ENCODE measurements at regions of chr9 and their contacts with region 1.

Region 1: DNA sequence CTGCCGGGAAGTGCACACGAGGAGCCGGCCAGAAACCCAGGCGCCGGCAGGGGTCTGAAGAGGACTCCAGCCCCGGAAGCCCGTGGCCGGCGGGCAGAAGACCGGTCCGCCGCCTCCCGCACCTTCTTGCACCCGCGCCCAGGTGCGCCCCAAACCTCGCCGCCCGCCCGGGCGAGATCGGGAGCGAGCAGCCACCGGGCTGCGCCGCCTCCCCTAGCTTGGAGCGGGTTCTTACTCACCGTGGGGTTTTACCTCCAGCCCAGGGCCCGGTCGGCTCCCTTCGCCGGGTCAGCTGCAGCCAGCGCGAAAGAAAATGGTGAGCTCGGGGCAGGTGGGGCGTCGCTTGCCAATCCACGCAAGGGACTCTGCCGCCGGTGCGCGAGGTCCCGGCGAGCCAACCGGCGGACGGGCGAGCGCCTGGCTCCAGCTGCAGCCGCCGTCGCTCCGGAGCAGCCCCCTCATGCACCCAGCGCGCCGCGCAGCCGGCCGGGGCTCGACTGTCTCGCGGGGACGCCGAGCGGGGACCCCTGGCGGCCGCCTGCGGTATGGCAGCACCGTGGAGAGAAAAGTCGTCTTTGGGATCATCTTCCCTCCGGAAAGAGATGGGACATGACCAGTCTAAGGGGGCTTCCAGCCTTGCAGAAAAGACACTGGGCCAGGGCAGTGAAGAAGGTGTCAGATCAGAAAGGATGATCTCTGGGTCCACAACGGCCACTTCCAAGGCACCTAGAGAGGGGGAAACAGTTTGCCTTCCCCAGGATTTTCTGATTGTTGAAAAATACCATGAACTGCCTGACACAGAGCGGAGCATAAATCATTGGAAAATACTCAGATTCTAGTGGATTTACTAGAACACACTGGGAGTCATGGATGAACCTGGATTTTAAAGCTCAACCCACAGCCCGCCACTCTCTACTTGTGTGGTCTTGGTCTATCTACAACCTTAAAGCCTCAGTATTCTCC is at the start of gene MOB3B:
- DNase-seq: peak; percentile 65 to 76
- ATAC-seq: peak; percentile 89 to 96
- H3K4me3 ChIP-seq: peak within 1 kb of the TSS; percentile 70
- H3K27ac ChIP-seq: peak within 1 kb of the TSS; percentile 74 to 86
- H3K4me1 ChIP-seq: peaks cover 3% of the 10 kb centered on the region; the same call in 1 of the 3 replicates
- CTCF ChIP-seq: peak; percentile 74
- EP300 ChIP-seq: no peak
- POLR2A ChIP-seq: peak; percentile 14; the same call in 1 of the 2 replicates
- RAD21 ChIP-seq: peak; percentile 64 to 82
- polyA plus RNA-seq, gene MOB3B: 5.2 and 6.0 TPM in 2 replicates

Region 2: DNA sequence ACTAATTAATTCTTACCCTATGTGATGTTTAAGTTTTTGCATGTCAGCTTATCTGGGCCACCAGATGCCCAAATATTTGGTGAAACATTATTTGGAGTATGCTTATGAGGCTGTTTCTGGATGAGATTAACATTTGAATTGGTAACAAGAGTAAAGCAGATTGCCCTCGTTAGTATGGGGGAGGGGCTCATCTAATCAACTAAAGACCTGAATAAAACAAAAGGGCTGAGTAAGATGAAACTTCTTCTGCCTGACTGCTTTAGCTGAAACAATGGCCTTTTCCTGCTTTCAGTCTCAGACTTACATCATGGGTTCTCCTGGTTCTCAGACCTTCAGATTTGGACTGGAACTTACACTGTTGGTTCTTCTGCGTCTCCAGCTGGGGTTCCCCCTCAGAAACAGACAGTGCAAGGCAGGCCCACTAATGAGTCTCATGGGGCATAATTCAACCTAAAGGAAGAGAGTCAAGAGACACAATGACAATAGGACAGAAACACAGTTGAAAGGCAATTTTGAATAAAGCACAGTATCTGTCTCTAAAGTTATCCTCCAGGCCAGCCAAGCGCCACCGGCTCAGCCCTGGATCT is 925.4 kb before region 1 on chr9:
- CTCF ChIA-PET with region 1: no interaction called
- POLR2A ChIA-PET with region 1: no interaction called
- DNase-seq: no peak
- ATAC-seq: no peak
- H3K4me3 ChIP-seq: no peak overlapping the region
- H3K27ac ChIP-seq: no peak overlapping the region
- H3K4me1 ChIP-seq: no peaks in the 10 kb centered on the region
- CTCF ChIP-seq: no peak
- EP300 ChIP-seq: no peak
- POLR2A ChIP-seq: no peak
- RAD21 ChIP-seq: no peak

Region 3: GRCh38 chr9:27333241-27334052 is 196.2 kb before region 1 on chr9:
- CTCF ChIA-PET with region 1: interaction called, 266 read pairs
- POLR2A ChIA-PET with region 1: interaction called, 9 read pairs
- DNase-seq: peak; percentile 59 to 71
- ATAC-seq: peak; percentile 58 to 84
- H3K4me3 ChIP-seq: no peak overlapping the region
- H3K27ac ChIP-seq: peak overlapping the region; percentile 53; a peak in 4 of 6 replicates
- H3K4me1 ChIP-seq: peaks cover 6% of the 10 kb centered on the region; the same call in 2 of the 3 replicates
- CTCF ChIP-seq: peak; percentile 89
- EP300 ChIP-seq: no peak
- POLR2A ChIP-seq: no peak
- RAD21 ChIP-seq: peak; percentile 90 to 97

Region 4: GRCh38 chr9:27371382-27371781 is 158.2 kb before region 1 on chr9:
- CTCF ChIA-PET with region 1: interaction called, 12 read pairs
- POLR2A ChIA-PET with region 1: no interaction called
- DNase-seq: peak; percentile 41 to 67
- ATAC-seq: peak; percentile 88 to 94
- H3K4me3 ChIP-seq: no peak overlapping the region
- H3K27ac ChIP-seq: peak overlapping the region; percentile 58 to 69
- H3K4me1 ChIP-seq: peaks cover 25% of the 10 kb centered on the region
- CTCF ChIP-seq: no peak
- EP300 ChIP-seq: no peak
- POLR2A ChIP-seq: no peak
- RAD21 ChIP-seq: no peak

Region 5: GRCh38 chr9:27430750-27431535 is 98.7 kb before region 1 on chr9:
- CTCF ChIA-PET with region 1: interaction called, 20 read pairs
- POLR2A ChIA-PET with region 1: no interaction called
- DNase-seq: no peak
- ATAC-seq: no peak
- H3K4me3 ChIP-seq: no peak overlapping the region
- H3K27ac ChIP-seq: peak overlapping the region in 1 of 2 experiments; percentile 28; a peak in 2 of 6 replicates
- H3K4me1 ChIP-seq: peaks cover 58% of the 10 kb centered on the region
- CTCF ChIP-seq: no peak
- EP300 ChIP-seq: no peak
- POLR2A ChIP-seq: no peak
- RAD21 ChIP-seq: no peak

Region 6: DNA sequence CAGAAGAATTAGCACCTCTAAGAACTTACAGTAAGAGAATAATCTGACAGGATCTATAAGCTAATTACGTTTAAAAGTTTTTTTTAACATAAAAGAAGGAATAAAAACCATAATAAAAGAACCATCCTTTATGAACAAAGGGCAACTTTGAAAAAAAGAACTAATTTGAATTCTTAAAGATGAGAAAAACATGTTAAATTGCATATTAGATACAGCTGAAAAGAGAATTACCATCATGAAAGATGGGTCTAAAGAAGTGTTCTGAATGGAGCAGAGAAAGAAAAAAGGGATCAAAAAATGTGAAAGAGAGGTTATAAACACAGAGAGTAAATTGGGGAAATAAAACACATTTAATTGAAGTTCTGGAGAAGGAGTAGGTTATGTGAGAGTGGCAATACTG is 51.3 kb before region 1 on chr9:
- CTCF ChIA-PET with region 1: no interaction called
- POLR2A ChIA-PET with region 1: no interaction called
- DNase-seq: no peak
- ATAC-seq: no peak
- H3K4me3 ChIP-seq: no peak overlapping the region
- H3K27ac ChIP-seq: no peak overlapping the region
- H3K4me1 ChIP-seq: no peaks in the 10 kb centered on the region
- CTCF ChIP-seq: no peak
- EP300 ChIP-seq: no peak
- POLR2A ChIP-seq: no peak
- RAD21 ChIP-seq: no peak

Region 7: DNA sequence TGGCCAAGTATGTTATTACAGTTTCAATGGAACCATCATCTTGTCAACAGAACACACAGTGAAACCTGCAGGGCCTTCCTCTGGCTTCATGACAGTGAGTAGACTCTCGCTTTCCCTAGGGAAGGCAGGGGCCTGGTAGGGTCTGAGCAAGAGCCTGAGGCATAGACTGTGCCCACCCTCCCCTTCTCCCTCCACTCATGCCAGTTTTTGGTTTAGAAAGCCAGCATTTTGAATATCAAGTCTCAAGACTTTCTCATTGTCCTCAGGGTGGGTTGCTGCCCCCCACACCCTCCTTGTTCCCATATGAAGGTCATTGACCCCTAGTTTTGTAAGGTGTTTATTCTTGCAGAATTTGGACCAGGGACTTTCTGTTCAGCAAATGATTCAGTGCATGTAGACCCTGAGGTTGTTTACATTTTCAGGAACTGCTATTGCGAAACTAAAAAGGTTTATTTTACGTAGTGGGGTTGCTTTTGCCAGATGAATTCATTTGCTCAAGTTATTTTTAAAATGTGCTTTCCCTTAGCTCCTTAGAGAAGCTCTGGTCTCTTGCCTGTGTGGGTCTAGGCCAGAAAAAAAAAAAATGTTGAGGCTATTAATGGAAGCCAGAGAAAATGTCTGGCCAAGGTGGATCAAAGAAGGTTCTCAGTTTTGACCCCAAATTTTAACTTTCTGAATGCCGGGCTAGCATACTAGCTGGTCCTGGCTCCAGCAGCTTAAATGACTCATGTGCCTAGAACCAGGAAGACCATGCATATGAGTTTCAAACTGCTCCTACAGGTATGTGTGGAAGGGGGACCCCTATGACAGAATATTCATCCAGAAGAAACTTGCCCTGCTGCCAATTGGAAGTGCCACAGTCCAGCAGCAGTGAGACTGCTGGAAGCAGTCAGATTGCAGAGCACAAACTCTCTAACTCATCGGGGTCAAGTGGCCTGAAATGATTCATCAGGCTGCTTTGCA is 10.2 kb after region 1 on chr9:
- CTCF ChIA-PET with region 1: interaction called, 66 read pairs
- POLR2A ChIA-PET with region 1: interaction called, 3 read pairs
- DNase-seq: peak in 1 of 2 experiments; percentile 42
- ATAC-seq: peak; percentile 64 to 78
- H3K4me3 ChIP-seq: no peak overlapping the region
- H3K27ac ChIP-seq: peak overlapping the region; percentile 59 to 74; a peak in 5 of 6 replicates
- H3K4me1 ChIP-seq: peaks cover 49% of the 10 kb centered on the region
- CTCF ChIP-seq: no peak
- EP300 ChIP-seq: peak; percentile 31 to 63; a peak in 2 of 5 replicates
- POLR2A ChIP-seq: no peak
- RAD21 ChIP-seq: no peak